Caco-2 (cell line): ENCODE measurements at regions of chr12 and their contacts with region 1.

Region 1: GRCh38 chr12:76037130-76038103 is 5.8 kb upstream of the PHLDA1 start:
- DNase-seq: peak; percentile 53 to 66
- H3K4me3 ChIP-seq: no peak overlapping the region
- H3K4me3 Mint-ChIP-seq: no peak overlapping the region
- H3K27ac Mint-ChIP-seq: peak overlapping the region; percentile 16
- H3K4me1 ChIP-seq: peaks cover 38% of the 10 kb centered on the region
- H3K4me1 Mint-ChIP-seq: peaks cover 41% of the 10 kb centered on the region
- H3K27me3 ChIP-seq: no peaks in the 10 kb centered on the region
- H3K27me3 Mint-ChIP-seq: no peaks in the 10 kb centered on the region
- CTCF ChIP-seq: peak; percentile 66 to 77

Region 2: DNA sequence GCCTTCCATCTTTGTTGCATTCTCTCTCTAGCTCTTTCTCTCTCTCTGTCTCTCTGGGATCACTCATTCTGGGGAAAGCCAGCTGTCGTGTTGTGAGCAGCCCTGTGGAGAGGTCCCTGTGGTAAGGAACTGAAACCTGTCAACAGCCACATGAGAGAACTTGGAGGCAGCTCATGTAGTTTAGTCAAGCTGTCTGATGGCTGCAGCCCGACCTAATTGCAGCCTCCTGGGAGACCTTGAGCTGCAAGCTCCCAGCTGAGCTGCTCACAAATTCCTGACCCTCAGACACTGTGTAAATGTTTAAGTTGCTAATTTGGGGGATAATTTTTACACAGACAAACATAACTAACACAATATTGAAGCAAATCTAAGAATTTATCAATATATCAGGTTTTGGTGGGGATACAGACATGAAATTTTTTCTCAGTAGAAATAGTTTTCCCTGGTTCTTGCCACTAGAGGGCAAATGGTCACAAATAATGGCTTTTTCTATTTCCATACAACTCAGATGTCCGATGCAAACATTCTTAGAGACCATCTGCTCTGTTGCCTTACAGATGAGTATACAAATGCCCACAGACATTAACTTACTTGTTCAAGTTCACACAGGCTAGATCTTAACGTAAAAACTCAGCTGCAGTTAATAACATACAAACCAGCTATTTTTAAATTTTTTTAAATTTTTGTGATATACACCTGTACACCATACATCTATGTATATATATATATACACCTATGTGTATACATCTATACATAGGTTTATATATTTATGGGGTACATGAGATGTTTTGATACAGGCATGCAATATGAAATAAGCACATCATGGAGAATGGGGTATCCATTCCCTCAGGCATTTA is 510.5 kb before region 1 on chr12:
- CTCF ChIA-PET with region 1: interaction called, 18 read pairs
- POLR2A ChIA-PET with region 1: interaction called, 4 read pairs
- intact Hi-C with region 1: loop called (anchors 1 kb)
- DNase-seq: peak; percentile 28 to 37
- H3K4me3 ChIP-seq: no peak overlapping the region
- H3K4me3 Mint-ChIP-seq: no peak overlapping the region
- H3K27ac Mint-ChIP-seq: no peak overlapping the region
- H3K4me1 ChIP-seq: no peaks in the 10 kb centered on the region
- H3K4me1 Mint-ChIP-seq: peaks cover 17% of the 10 kb centered on the region
- H3K27me3 ChIP-seq: no peaks in the 10 kb centered on the region
- H3K27me3 Mint-ChIP-seq: peaks cover 2% of the 10 kb centered on the region
- CTCF ChIP-seq: peak; percentile 75 to 77

Region 3: DNA sequence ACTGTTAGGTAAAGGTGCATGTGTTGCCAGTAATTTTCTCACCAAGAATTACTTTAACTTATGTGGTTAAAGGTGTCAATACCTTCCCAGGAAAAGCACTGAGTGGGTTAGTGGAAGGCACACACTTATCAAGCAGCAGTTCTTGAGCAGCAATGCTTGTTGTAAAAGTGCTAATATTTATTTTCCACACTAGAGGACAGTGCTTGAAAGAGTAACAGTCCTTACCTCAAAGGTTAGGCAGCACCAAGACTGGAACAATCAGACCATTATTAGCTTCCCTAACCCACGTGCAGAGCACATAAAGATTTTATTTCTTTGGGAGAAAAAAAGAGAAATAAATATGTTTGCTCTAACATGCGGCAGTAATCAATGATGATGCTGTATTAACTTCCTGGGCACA is 477.2 kb before region 1 on chr12:
- CTCF ChIA-PET with region 1: interaction called, 3 read pairs
- POLR2A ChIA-PET with region 1: no interaction called
- intact Hi-C with region 1: loop called (anchors 1 kb)
- DNase-seq: no peak
- H3K4me3 ChIP-seq: no peak overlapping the region
- H3K4me3 Mint-ChIP-seq: no peak overlapping the region
- H3K27ac Mint-ChIP-seq: no peak overlapping the region
- H3K4me1 ChIP-seq: no peaks in the 10 kb centered on the region
- H3K4me1 Mint-ChIP-seq: peaks cover 5% of the 10 kb centered on the region
- H3K27me3 ChIP-seq: no peaks in the 10 kb centered on the region
- H3K27me3 Mint-ChIP-seq: no peaks in the 10 kb centered on the region
- CTCF ChIP-seq: peak in 1 of 2 experiments; percentile 50

Region 4: GRCh38 chr12:75623631-75624118 is 413.7 kb before region 1 on chr12:
- CTCF ChIA-PET with region 1: interaction called, 4 read pairs
- POLR2A ChIA-PET with region 1: no interaction called
- intact Hi-C with region 1: loop called (anchors 1 kb)
- DNase-seq: peak; percentile 46 to 50
- H3K4me3 ChIP-seq: no peak overlapping the region
- H3K4me3 Mint-ChIP-seq: no peak overlapping the region
- H3K27ac Mint-ChIP-seq: peak overlapping the region; percentile 76
- H3K4me1 ChIP-seq: peaks cover 17% of the 10 kb centered on the region
- H3K4me1 Mint-ChIP-seq: peaks cover 20% of the 10 kb centered on the region
- H3K27me3 ChIP-seq: no peaks in the 10 kb centered on the region
- H3K27me3 Mint-ChIP-seq: no peaks in the 10 kb centered on the region
- CTCF ChIP-seq: peak; percentile 20 to 51

Region 5: GRCh38 chr12:75816897-75817296 is 220.5 kb before region 1 on chr12:
- CTCF ChIA-PET with region 1: no interaction called
- POLR2A ChIA-PET with region 1: no interaction called
- intact Hi-C with region 1: loop called (anchors 2 kb)
- DNase-seq: no peak
- H3K4me3 ChIP-seq: no peak overlapping the region
- H3K4me3 Mint-ChIP-seq: no peak overlapping the region
- H3K27ac Mint-ChIP-seq: no peak overlapping the region
- H3K4me1 ChIP-seq: peaks cover 4% of the 10 kb centered on the region; the same call in 1 of the 2 replicates
- H3K4me1 Mint-ChIP-seq: peaks cover 6% of the 10 kb centered on the region
- H3K27me3 ChIP-seq: no peaks in the 10 kb centered on the region
- H3K27me3 Mint-ChIP-seq: no peaks in the 10 kb centered on the region
- CTCF ChIP-seq: no peak